ENCODE measurements at regions of chr18 and their contacts with region 1.

Region 1: DNA sequence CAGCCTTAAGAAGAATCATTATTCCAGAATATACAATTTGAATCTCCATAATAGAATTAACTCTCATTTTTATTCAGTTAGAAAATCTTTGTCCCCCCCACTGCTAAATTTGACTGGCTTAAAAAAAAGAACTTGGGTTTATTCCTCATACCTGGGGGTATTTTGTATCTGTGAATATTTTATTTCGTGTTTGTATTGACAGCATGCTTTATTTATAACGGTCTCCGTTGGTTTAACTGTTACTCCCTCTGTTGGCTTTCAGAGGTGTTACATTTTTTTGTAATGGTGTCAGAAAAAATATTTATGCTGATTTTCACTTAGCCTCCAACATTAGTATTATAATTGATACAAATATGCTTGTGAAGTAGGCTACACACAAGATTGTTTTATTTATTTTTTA is 109.1 kb downstream of the HAUS1 start:
- DNase-seq: no peak
- H3K4me3 ChIP-seq: no peak overlapping the region
- H3K27ac ChIP-seq: no peak overlapping the region
- H3K4me1 ChIP-seq: peaks cover 9% of the 10 kb centered on the region
- H3K27me3 ChIP-seq: no peaks in the 10 kb centered on the region
- CTCF ChIP-seq: peak; percentile 49 to 59

Region 2: GRCh38 chr18:46133534-46133933 is 79.8 kb before region 1 on chr18:
- CTCF ChIA-PET with region 1: no interaction called
- dilution Hi-C with region 1: loop called (anchors 10 kb)
- in situ Hi-C with region 1: no loop called
- intact Hi-C with region 1: no loop called
- DNase-seq: no peak
- H3K4me3 ChIP-seq: no peak overlapping the region
- H3K27ac ChIP-seq: no peak overlapping the region
- H3K4me1 ChIP-seq: no peaks in the 10 kb centered on the region
- H3K27me3 ChIP-seq: no peaks in the 10 kb centered on the region
- CTCF ChIP-seq: no peak

Region 3: DNA sequence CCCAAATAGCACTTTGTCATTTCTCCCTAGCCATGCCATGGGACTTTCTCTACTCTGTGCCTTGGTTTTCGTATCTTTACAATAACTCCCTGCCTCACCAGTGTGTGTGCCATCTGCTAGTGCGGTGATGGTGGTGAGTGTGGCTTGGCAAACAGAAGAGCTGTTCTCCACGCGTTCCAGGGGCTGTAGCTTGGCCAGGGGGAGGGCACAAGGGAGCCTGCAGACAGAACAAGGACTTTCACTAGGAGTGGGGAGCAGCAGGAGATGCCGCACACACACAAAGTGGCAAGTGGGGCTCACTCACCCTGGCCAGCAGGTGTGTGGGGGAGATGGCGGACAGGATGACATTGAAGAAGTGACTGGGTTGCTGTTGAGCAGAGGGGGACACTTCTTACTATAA is 87.8 kb after region 1 on chr18:
- CTCF ChIA-PET with region 1: no interaction called
- dilution Hi-C with region 1: no loop called
- in situ Hi-C with region 1: no loop called
- intact Hi-C with region 1: no loop called
- DNase-seq: no peak
- H3K4me3 ChIP-seq: no peak overlapping the region
- H3K27ac ChIP-seq: no peak overlapping the region
- H3K4me1 ChIP-seq: no peaks in the 10 kb centered on the region
- H3K27me3 ChIP-seq: no peaks in the 10 kb centered on the region
- CTCF ChIP-seq: no peak

Region 4: DNA sequence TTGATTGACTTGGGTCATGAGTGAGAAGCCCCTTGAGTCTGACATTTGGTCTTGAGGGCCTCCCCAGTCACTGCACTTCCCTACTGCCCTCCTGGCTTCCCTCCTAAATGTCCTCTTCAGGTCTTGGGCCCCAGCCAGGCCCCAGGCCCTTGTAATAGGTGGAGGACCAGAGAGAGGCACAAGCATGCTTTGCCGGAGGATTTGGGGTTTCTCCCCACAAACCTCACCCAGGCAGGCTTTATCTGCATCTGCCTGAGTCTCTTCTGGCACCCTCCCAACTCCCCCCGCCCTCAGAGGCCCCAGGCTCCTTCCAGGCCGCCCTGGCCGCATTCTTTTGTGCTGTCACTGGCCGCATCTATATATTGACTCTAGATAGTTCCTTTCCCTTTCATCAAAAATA is 161.6 kb after region 1 on chr18:
- CTCF ChIA-PET with region 1: no interaction called
- dilution Hi-C with region 1: no loop called
- in situ Hi-C with region 1: no loop called
- intact Hi-C with region 1: no loop called
- DNase-seq: peak; percentile 4
- H3K4me3 ChIP-seq: no peak overlapping the region
- H3K27ac ChIP-seq: no peak overlapping the region
- H3K4me1 ChIP-seq: no peaks in the 10 kb centered on the region
- H3K27me3 ChIP-seq: no peaks in the 10 kb centered on the region
- CTCF ChIP-seq: no peak